A673 (cell line): ENCODE measurements at regions of chr6 and their contacts with region 1.

Region 1: GRCh38 chr6:26270903-26271667 is 93.9 kb upstream of the BTN3A2 start:
- DNase-seq: peak; percentile 97
- H3K4me3 ChIP-seq: peak overlapping the region; percentile 66
- H3K27ac ChIP-seq: peak overlapping the region; percentile 94
- H3K4me1 ChIP-seq: peaks cover 16% of the 10 kb centered on the region
- H3K27me3 ChIP-seq: no peaks in the 10 kb centered on the region
- CTCF ChIP-seq: no peak

Region 2: GRCh38 chr6:25404693-25405169 is 866.4 kb before region 1 on chr6:
- CTCF ChIA-PET with region 1: no interaction called
- POLR2A ChIA-PET with region 1: no interaction called
- intact Hi-C with region 1: no loop called
- DNase-seq: no peak
- H3K4me3 ChIP-seq: no peak overlapping the region
- H3K27ac ChIP-seq: no peak overlapping the region
- H3K4me1 ChIP-seq: no peaks in the 10 kb centered on the region
- H3K27me3 ChIP-seq: no peaks in the 10 kb centered on the region
- CTCF ChIP-seq: no peak

Region 3: GRCh38 chr6:26249957-26250697 is 21.0 kb before region 1 on chr6:
- CTCF ChIA-PET with region 1: no interaction called
- POLR2A ChIA-PET with region 1: interaction called, 20 read pairs
- intact Hi-C with region 1: no loop called
- DNase-seq: peak; percentile 93
- H3K4me3 ChIP-seq: peak overlapping the region; percentile 68
- H3K27ac ChIP-seq: peak overlapping the region; percentile 96
- H3K4me1 ChIP-seq: peaks cover 3% of the 10 kb centered on the region
- H3K27me3 ChIP-seq: no peaks in the 10 kb centered on the region
- CTCF ChIP-seq: peak; percentile 44; the same call in 1 of the 2 replicates

Region 4: GRCh38 chr6:26285143-26286134 is 14.4 kb after region 1 on chr6:
- CTCF ChIA-PET with region 1: no interaction called
- POLR2A ChIA-PET with region 1: interaction called, 19 read pairs
- intact Hi-C with region 1: no loop called
- DNase-seq: peak; percentile 99
- H3K4me3 ChIP-seq: peak overlapping the region; percentile 57
- H3K27ac ChIP-seq: peak overlapping the region; percentile 92
- H3K4me1 ChIP-seq: peaks cover 3% of the 10 kb centered on the region
- H3K27me3 ChIP-seq: no peaks in the 10 kb centered on the region
- CTCF ChIP-seq: no peak

Region 5: GRCh38 chr6:26445934-26446667 is 175.0 kb after region 1 on chr6:
- CTCF ChIA-PET with region 1: no interaction called
- POLR2A ChIA-PET with region 1: no interaction called
- intact Hi-C with region 1: no loop called
- DNase-seq: no peak
- H3K4me3 ChIP-seq: no peak overlapping the region
- H3K27ac ChIP-seq: no peak overlapping the region
- H3K4me1 ChIP-seq: no peaks in the 10 kb centered on the region
- H3K27me3 ChIP-seq: no peaks in the 10 kb centered on the region
- CTCF ChIP-seq: no peak